Activated CD8-positive, alpha-beta memory T cell treated with anti-CD3 and anti-CD28 coated beads, Interleukin-2, amount 10 ng/mL, durations not matched to agents 7 days and 5 days (primary cell): ENCODE measurements at regions of chr18 and their contacts with region 1.

Region 1: GRCh38 chr18:58768293-58768974 is 96.2 kb upstream of the ZNF532 start:
- DNase-seq: peak; percentile 69
- ATAC-seq: peak; percentile 88
- H3K4me3 Mint-ChIP-seq: peak overlapping the region; percentile 4
- H3K27ac Mint-ChIP-seq: no peak overlapping the region
- H3K4me1 Mint-ChIP-seq: peaks cover 15% of the 10 kb centered on the region
- H3K27me3 Mint-ChIP-seq: peaks cover 56% of the 10 kb centered on the region

Region 2: GRCh38 chr18:58520969-58521368 is 247.5 kb before region 1 on chr18:
- CTCF ChIA-PET with region 1: interaction called, 247 read pairs
- DNase-seq: no peak
- ATAC-seq: no peak
- H3K4me3 Mint-ChIP-seq: no peak overlapping the region
- H3K27ac Mint-ChIP-seq: no peak overlapping the region
- H3K4me1 Mint-ChIP-seq: peaks cover 6% of the 10 kb centered on the region
- H3K27me3 Mint-ChIP-seq: peaks cover 28% of the 10 kb centered on the region

Region 3: GRCh38 chr18:58529714-58530354 is 238.6 kb before region 1 on chr18:
- CTCF ChIA-PET with region 1: interaction called, 247 read pairs
- DNase-seq: peak; percentile 74
- ATAC-seq: peak; percentile 78
- H3K4me3 Mint-ChIP-seq: no peak overlapping the region
- H3K27ac Mint-ChIP-seq: no peak overlapping the region
- H3K4me1 Mint-ChIP-seq: peaks cover 8% of the 10 kb centered on the region
- H3K27me3 Mint-ChIP-seq: peaks cover 46% of the 10 kb centered on the region

Region 4: DNA sequence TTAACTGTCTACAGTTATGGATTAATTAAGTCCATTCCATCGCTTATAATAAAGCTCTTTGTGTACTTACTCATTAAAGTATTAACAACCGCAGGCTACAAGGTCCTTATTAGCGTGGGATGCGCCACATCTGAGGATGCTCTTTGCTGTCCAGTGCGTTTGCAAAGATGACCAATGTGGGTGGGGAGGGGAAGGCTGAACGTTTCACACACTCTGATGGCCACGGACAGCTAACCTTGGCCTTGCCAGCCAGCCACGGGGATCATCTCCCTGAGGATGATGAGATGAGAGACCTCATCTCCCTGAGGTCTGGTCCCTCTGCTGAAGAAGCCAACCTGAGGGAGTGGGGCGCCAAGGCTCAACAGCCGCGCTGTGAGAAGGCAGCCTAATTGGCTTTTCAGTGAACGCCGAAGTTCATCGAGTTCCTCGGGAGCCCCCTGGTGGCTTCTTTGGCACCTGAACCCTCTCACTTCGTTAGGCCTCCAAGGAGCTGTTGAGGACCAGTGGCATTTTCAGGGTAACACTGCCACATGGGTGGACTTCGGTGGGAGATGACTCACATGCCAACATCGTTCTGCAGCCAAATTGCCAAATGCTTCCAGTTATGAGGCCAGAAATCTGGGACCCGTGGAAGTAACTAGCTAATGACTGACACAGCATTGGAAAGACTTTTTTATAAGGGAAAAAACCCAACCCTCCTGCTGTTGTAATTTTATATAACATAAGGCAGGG is 301.9 kb after region 1 on chr18:
- CTCF ChIA-PET with region 1: interaction called, 34 read pairs
- DNase-seq: peak; percentile 81
- ATAC-seq: peak; percentile 78
- H3K4me3 Mint-ChIP-seq: no peak overlapping the region
- H3K27ac Mint-ChIP-seq: no peak overlapping the region
- H3K4me1 Mint-ChIP-seq: no peaks in the 10 kb centered on the region
- H3K27me3 Mint-ChIP-seq: no peaks in the 10 kb centered on the region